Activated CD8-positive, alpha-beta T cell treated with anti-CD3 and anti-CD28 coated beads, Interleukin-2, amount 10 ng/mL, durations not matched to agents 7 days and 5 days (primary cell): ENCODE measurements at regions of chr1 and their contacts with region 1.

Region 1: GRCh38 chr1:30718636-30719405 is 4.6 kb downstream of the MATN1 start:
- DNase-seq: peak; percentile 86
- ATAC-seq: peak; percentile 74
- H3K4me3 Mint-ChIP-seq: peak overlapping the region; percentile 84
- H3K27ac Mint-ChIP-seq: peak overlapping the region; percentile 97
- H3K4me1 Mint-ChIP-seq: peaks cover 24% of the 10 kb centered on the region
- H3K27me3 Mint-ChIP-seq: no peaks in the 10 kb centered on the region

Region 2: DNA sequence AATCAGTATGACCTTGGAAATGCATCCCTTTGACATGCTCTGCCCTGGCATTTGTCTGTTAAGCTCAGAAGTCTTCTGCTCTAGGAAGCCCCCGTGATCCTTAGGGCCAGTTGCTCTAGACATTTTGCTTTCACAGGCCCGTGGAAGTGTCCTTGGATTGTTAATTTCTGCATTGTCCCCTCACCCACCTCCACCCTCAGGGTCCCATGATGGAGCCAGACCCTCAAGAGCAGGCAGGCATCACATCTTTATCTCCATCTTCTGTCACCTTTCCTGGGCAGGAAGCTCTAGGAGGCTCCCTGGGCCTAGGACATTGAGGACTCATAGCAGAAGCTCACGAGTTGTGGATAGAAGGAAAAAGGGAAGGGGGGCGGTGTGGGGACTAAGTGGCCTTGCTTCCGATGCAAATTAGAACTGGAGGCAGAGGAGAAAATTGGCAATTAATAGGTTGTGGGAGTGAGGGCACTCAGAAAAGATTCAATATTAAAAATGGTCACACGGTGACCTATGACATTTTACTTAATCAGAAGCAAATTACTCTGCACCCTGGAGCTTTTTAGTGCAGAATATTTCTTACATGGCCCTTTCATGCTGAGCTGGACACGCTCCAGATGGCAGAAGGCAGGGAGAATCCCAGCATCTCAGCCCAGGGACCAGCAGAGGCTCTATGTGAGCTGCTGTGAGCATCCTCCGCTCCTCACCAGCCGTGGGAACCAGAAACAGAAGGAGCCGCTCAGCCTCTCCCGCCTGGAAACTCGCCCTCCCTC is 180.4 kb before region 1 on chr1:
- CTCF ChIA-PET with region 1: no interaction called
- POLR2A ChIA-PET with region 1: no interaction called
- DNase-seq: no peak
- ATAC-seq: no peak
- H3K4me3 Mint-ChIP-seq: no peak overlapping the region
- H3K27ac Mint-ChIP-seq: no peak overlapping the region
- H3K4me1 Mint-ChIP-seq: no peaks in the 10 kb centered on the region
- H3K27me3 Mint-ChIP-seq: no peaks in the 10 kb centered on the region

Region 3: DNA sequence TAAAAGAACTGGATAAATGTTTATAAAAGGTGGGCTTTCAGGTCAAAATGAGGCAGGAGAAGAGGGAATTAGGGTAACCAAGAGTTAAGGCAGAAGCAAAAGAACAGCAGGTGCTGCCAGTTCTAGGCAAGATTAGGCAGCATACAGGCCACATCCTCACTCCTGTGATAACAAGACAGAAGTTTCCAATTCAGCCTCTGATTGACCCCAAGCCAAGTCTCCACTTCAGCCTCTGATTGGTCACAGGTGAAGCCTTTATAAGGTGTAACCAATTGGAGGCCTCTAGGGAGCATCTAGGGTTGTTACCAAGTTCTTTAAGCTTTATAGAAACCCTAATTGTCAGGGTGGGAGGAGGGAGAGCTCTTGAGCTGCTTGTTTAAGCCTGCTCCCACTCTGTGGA is 156.3 kb before region 1 on chr1:
- CTCF ChIA-PET with region 1: no interaction called
- POLR2A ChIA-PET with region 1: no interaction called
- DNase-seq: no peak
- ATAC-seq: no peak
- H3K4me3 Mint-ChIP-seq: no peak overlapping the region
- H3K27ac Mint-ChIP-seq: no peak overlapping the region
- H3K4me1 Mint-ChIP-seq: no peaks in the 10 kb centered on the region
- H3K27me3 Mint-ChIP-seq: peaks cover 5% of the 10 kb centered on the region

Region 4: GRCh38 chr1:30707412-30708360 is 11.1 kb before region 1 on chr1:
- CTCF ChIA-PET with region 1: no interaction called
- POLR2A ChIA-PET with region 1: no interaction called
- DNase-seq: peak; percentile 57
- ATAC-seq: peak; percentile 56
- H3K4me3 Mint-ChIP-seq: no peak overlapping the region
- H3K27ac Mint-ChIP-seq: no peak overlapping the region
- H3K4me1 Mint-ChIP-seq: no peaks in the 10 kb centered on the region
- H3K27me3 Mint-ChIP-seq: peaks cover 9% of the 10 kb centered on the region

Region 5: GRCh38 chr1:30732277-30732996 is 13.6 kb after region 1 on chr1:
- CTCF ChIA-PET with region 1: interaction called, 45 read pairs
- POLR2A ChIA-PET with region 1: interaction called, 9 read pairs
- DNase-seq: no peak
- ATAC-seq: no peak
- H3K4me3 Mint-ChIP-seq: no peak overlapping the region
- H3K27ac Mint-ChIP-seq: peak overlapping the region; percentile 58
- H3K4me1 Mint-ChIP-seq: peaks cover 31% of the 10 kb centered on the region
- H3K27me3 Mint-ChIP-seq: no peaks in the 10 kb centered on the region

Region 6: DNA sequence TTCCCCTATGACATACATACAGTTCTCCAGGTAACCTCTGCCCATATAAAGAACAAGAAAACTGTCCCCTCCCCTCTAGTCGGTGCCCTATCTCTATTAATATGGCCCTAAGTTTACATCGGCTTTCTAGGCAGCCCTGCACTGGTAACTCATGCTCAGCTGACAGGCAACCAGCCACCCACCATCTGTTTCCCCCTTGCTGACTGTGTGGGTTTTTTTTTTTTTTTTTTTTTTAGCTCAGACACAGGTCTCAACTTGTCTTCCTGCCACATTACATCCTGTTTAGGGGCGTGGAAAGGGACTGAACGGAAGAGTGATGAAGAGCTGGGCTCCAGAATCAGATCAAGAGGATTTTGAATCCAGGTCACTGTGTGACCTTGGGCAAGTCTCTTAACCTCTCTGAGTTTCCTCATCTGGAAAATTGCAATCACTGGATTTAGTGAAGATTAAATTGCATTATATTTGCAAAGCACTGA is 24.8 kb after region 1 on chr1:
- CTCF ChIA-PET with region 1: interaction called, 80 read pairs
- POLR2A ChIA-PET with region 1: interaction called, 18 read pairs
- DNase-seq: peak; percentile 89
- ATAC-seq: peak; percentile 77
- H3K4me3 Mint-ChIP-seq: peak overlapping the region; percentile 65
- H3K27ac Mint-ChIP-seq: peak overlapping the region; percentile 89
- H3K4me1 Mint-ChIP-seq: peaks cover 98% of the 10 kb centered on the region
- H3K27me3 Mint-ChIP-seq: no peaks in the 10 kb centered on the region

Region 7: DNA sequence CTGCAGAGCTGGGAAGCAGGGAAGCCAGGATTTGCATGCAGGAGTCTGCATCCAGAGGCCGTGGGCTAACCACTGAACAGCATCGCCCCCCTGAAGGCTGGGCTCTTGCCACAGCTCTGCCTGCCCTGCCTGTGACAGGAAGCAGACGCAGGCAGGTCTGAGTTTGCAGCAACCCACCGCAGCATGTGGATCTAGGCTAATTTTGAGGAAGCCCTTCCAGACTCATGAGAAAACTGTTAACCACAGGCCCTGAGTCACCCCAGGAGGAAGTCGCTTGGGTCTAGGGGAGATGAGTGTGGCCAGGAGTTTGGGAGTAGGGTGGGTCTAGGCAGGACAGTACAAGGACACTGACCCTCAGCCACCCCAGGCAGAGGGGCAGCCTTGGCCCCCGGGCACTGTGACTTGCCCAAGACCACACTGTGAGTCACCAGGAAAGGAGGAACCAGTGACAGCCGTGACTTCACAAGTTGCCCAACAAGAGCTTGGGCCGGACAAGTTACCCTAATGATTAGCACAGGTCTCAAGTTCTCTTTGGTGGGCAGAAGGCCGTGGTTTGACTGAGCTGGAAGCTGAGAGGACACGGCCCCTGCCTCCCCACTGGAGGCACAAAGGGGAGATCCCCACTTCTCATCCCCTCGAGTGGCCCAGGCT is 37.8 kb after region 1 on chr1:
- CTCF ChIA-PET with region 1: interaction called, 242 read pairs
- POLR2A ChIA-PET with region 1: interaction called, 10 read pairs
- DNase-seq: peak; percentile 84
- ATAC-seq: peak; percentile 56
- H3K4me3 Mint-ChIP-seq: peak overlapping the region; percentile 96
- H3K27ac Mint-ChIP-seq: peak overlapping the region; percentile 96
- H3K4me1 Mint-ChIP-seq: peaks cover 81% of the 10 kb centered on the region
- H3K27me3 Mint-ChIP-seq: no peaks in the 10 kb centered on the region

Region 8: GRCh38 chr1:30911046-30911954 is 192.5 kb after region 1 on chr1:
- CTCF ChIA-PET with region 1: interaction called, 33 read pairs
- POLR2A ChIA-PET with region 1: no interaction called
- DNase-seq: peak; percentile 67
- ATAC-seq: no peak
- H3K4me3 Mint-ChIP-seq: no peak overlapping the region
- H3K27ac Mint-ChIP-seq: no peak overlapping the region
- H3K4me1 Mint-ChIP-seq: peaks cover 25% of the 10 kb centered on the region
- H3K27me3 Mint-ChIP-seq: peaks cover 29% of the 10 kb centered on the region

Region 9: GRCh38 chr1:30919025-30919881 is 200.4 kb after region 1 on chr1:
- CTCF ChIA-PET with region 1: interaction called, 10 read pairs
- POLR2A ChIA-PET with region 1: no interaction called
- DNase-seq: no peak
- ATAC-seq: no peak
- H3K4me3 Mint-ChIP-seq: no peak overlapping the region
- H3K27ac Mint-ChIP-seq: no peak overlapping the region
- H3K4me1 Mint-ChIP-seq: peaks cover 3% of the 10 kb centered on the region
- H3K27me3 Mint-ChIP-seq: peaks cover 22% of the 10 kb centered on the region

Region 10: DNA sequence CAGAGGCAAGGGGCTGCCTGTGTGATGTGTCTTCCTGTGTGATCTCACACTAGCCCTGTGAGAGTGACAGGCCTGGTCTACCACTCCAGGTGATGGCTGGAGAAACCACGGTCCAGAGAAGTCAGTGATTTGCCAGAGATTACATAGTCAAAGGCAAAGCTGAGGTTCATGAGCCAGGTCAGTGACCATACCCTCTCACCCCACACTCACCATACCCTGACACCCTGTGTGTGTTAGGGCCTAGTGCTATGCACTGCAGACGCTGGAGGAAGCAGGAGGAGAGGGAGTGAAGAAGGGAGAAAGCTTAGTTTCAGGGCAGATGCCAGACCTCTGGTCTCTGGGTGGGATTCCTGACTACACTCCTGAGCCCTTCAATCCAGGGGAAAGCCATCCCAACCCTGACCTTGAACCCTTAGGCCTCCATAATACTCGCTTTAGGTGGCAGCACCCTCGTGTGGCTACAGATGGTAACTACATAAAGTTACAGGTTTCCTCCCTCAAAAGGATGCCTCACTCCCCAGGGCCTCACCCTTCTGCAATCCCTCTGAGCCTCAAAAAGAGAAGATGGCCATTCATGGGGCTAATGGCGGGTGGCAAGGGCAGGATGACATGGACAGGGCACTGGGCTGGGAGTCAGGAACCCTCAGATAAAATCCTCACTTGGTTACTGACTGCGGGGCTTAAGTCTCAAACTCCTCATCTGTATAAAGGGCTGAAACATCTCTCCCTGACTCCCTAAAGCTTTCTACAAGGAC is 210.5 kb after region 1 on chr1:
- CTCF ChIA-PET with region 1: interaction called, 20 read pairs
- POLR2A ChIA-PET with region 1: no interaction called
- DNase-seq: peak; percentile 68
- ATAC-seq: peak; percentile 76
- H3K4me3 Mint-ChIP-seq: no peak overlapping the region
- H3K27ac Mint-ChIP-seq: peak overlapping the region; percentile 55
- H3K4me1 Mint-ChIP-seq: peaks cover 8% of the 10 kb centered on the region
- H3K27me3 Mint-ChIP-seq: no peaks in the 10 kb centered on the region